ENCODE measurements at regions of chr2 and their contacts with region 1.

Region 1: GRCh38 chr2:171999604-172000469 is at the start of gene METAP1D:
- DNase-seq: peak; percentile 86
- H3K4me3 Mint-ChIP-seq: peak within 1 kb of the TSS; percentile 92
- H3K27ac Mint-ChIP-seq: peak within 1 kb of the TSS; percentile 96
- H3K4me1 Mint-ChIP-seq: peaks cover 18% of the 10 kb centered on the region
- H3K27me3 Mint-ChIP-seq: peaks cover 3% of the 10 kb centered on the region
- total RNA-seq, gene METAP1D: 6.0 and 7.9 TPM in 2 replicates

Region 2: GRCh38 chr2:171922230-171923022 is 77.4 kb before region 1 on chr2 and contains the start of gene HAT1:
- intact Hi-C with region 1: loop called (anchors 1 kb)
- DNase-seq: peak; percentile 97
- H3K4me3 Mint-ChIP-seq: peak within 1 kb of the TSS; percentile 94
- H3K27ac Mint-ChIP-seq: peak within 1 kb of the TSS; percentile 96
- H3K4me1 Mint-ChIP-seq: peaks cover 33% of the 10 kb centered on the region
- H3K27me3 Mint-ChIP-seq: peaks cover 2% of the 10 kb centered on the region
- total RNA-seq, gene HAT1: 67.4 and 70.1 TPM in 2 replicates

Region 3: DNA sequence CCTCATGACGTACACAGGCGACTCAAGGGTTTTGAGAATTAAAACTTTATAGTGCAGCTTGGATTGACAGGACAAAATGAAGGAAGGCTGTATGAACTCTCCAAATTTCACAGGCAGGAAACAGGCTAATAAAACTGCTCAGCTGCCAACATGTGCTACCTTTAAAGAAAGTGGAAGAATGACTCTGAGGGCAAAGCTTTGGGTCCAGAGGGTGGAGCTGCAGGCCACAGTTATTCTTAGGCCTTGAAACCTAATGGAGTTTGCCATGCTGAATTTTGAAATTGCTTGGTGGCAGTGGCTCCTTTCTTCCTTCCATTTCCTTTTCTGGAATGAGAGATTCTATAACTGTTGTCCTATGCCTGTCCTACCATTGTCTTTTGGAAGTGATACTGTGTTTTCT is 42.8 kb before region 1 on chr2:
- intact Hi-C with region 1: loop called (anchors 10 kb)
- DNase-seq: no peak
- H3K4me3 Mint-ChIP-seq: no peak overlapping the region
- H3K27ac Mint-ChIP-seq: no peak overlapping the region
- H3K4me1 Mint-ChIP-seq: peaks cover 35% of the 10 kb centered on the region
- H3K27me3 Mint-ChIP-seq: no peaks in the 10 kb centered on the region

Measured in activated T-helper 2 cell treated with anti-CD3 and anti-CD28 coated beads, Interferon-gamma antibody, Interleukin-2, Interleukin-4, amounts not matched to agents 10 μg/mL and 5 μg/mL and 100 μg/mL, durations not matched to agents 14 hours and 24 hours and 36 hours (primary cell).